ENCODE measurements at regions of chr17 and their contacts with region 1.

Region 1: DNA sequence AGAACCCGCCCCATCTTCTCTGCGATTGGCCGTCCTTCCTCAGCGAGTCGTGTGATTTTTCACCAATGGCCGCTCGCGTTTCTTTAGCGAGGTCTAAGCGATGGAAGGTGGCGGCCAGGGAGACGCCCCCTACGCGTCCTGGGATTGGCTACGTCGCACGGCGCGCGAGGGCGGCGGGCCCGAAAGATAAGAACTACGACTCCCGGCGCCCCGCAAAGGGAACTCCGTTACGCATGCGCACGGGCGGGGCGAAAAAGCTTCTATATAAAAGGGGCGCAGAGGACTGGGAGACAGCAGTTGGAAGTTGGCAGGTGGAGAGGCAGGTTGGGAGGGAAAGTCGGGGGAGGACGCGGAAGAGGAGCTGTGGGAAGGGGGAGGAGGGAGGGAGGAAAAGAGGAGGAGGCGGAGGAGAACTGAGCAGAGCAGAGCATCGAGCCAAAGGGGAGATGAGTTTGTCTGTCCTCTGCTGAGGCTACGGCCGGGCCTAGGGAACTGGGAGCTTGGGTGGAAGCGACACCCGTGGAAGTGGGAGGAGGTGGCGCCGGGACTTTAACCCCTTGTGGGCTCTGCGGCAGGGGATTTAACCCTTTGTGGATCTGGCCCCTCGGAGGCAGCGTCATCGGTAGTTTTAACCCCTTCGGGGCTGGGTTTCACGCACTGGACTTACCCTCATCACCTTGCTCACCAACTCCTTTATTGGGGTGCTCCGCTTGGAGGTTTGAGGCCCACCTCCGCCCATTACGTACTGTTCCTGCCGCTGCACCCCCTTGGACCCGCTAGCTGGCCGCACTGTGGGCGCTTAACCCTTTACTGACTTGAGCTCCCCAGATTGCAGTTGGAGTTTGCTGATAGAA is at the start of gene HEXIM1:
- DNase-seq: peak; percentile 99 to 100 (median 99)
- ATAC-seq: peak; percentile 80 to 88 (median 84)
- H3K4me3 ChIP-seq: peak within 1 kb of the TSS; percentile 63 to 93 (median 79)
- H3K27ac ChIP-seq: peak within 1 kb of the TSS; percentile 95 to 100 (median 99)
- H3K4me1 ChIP-seq: peaks cover 5 to 67% (median 36%) of the 10 kb centered on the region in 12 donors
- H3K27me3 ChIP-seq: no peaks in the 10 kb centered on the region
- CTCF ChIP-seq: no peak
- POLR2A ChIP-seq: peak; percentile 79 to 99
- total RNA-seq, gene HEXIM1: 14.4 to 28.7 (median 22.5) TPM

Region 2: DNA sequence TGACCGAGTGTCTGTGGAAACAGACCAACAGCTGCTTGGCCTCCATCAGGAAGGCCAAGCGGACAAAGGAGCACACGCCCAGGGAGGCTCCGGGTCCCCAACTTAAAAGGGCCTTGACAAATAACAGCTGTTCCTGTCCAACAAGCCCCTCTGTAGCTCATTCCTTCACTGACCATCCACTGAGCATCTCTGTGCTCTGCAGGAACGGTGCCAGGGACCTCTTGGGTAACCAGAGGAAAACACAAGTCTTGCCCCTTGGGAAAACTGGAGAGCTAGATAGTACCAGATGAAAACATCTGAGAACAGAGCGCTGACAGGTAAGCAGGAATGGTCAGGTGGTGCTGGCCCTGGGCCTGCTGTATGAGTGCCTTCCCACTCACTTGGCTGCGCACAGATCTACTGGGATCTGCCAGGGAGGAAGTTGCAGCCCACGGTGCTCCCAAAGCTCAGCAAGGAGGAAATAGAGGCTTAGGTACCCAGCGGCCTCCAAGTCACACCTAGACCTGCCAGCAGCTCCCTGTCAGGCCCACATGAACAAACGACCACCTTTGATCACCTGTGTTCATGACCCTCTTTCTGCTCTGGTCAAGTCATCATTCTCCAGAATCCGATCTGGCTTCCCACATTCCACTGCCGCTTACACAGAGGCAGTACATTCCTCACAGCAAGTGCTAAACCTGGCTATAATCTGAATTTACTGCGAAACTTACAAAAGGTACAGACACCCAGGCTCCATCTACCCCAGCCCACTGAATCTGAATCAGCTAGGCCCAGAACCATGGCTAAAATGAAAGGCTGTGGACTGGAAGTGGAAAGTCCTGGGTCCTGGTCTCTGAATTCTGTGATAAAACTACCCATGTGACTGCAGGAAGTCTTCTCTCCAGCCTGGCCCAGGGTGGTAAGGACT is 109.4 kb before region 1 on chr17:
- intact Hi-C with region 1: no loop called
- DNase-seq: peak in 1 of 5 donors; percentile 47
- ATAC-seq: peak in 2 of 4 donors; percentile 13 to 29
- H3K4me3 ChIP-seq: no peak overlapping the region
- H3K27ac ChIP-seq: peak overlapping the region in 2 of 12 donors; percentile 3 to 14
- H3K4me1 ChIP-seq: peaks cover 0 to 46% (median 23%) of the 10 kb centered on the region in 12 donors
- H3K27me3 ChIP-seq: no peaks in the 10 kb centered on the region
- CTCF ChIP-seq: no peak
- POLR2A ChIP-seq: no peak

Region 3: DNA sequence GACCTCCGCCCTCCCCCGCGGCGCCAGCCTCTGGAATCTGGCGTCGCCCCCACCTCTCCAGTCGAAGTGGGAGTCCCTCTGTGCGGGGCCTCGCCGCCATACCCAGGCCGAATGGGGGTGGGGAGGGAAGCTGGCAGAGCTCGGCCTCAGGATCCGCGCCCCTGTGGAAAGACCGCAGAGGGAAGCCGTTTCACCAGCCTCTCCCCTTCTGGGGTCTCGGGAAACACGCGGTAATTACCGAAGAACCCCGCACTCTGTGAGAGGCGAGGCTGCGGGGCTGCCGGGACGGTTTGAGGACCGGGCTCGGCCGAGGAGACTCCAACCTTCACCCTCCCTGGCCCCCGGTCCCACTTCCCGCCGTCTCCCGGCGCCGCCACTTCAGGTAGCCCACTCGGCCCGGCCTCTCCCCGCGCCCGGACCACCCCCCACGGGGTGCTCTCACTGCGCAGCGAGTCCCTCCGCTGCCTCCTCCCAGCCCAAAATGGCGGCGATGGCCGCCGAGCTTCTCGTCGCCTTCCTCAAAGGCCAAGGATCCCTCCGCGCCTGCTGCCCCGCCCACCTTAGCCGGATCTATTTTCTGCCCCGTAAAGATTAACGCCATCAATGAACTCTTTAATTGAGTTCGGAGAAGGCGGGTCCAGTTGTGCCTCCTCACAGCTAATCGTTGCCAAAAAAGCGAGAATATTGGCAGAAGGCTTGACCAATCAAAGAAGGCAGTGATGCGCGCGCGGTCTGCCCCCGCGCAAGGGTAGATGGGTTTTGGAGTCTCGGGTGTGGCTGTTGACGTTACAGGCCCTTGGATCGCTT is 12.8 kb after region 1 on chr17:
- intact Hi-C with region 1: loop called in 6 of 10 experiments (anchors 1 kb)
- DNase-seq: peak; percentile 97 to 99 (median 98)
- ATAC-seq: peak; percentile 96 to 98 (median 97)
- H3K4me3 ChIP-seq: peak overlapping the region; percentile 65 to 98 (median 93)
- H3K27ac ChIP-seq: peak overlapping the region; percentile 96 to 100 (median 100)
- H3K4me1 ChIP-seq: peaks cover 6 to 50% (median 36%) of the 10 kb centered on the region in 12 donors
- H3K27me3 ChIP-seq: no peaks in the 10 kb centered on the region
- CTCF ChIP-seq: peak in 3 of 12 donors; percentile 8 to 21 (median 17)
- POLR2A ChIP-seq: peak in 1 of 2 donors; percentile 81

Region 4: DNA sequence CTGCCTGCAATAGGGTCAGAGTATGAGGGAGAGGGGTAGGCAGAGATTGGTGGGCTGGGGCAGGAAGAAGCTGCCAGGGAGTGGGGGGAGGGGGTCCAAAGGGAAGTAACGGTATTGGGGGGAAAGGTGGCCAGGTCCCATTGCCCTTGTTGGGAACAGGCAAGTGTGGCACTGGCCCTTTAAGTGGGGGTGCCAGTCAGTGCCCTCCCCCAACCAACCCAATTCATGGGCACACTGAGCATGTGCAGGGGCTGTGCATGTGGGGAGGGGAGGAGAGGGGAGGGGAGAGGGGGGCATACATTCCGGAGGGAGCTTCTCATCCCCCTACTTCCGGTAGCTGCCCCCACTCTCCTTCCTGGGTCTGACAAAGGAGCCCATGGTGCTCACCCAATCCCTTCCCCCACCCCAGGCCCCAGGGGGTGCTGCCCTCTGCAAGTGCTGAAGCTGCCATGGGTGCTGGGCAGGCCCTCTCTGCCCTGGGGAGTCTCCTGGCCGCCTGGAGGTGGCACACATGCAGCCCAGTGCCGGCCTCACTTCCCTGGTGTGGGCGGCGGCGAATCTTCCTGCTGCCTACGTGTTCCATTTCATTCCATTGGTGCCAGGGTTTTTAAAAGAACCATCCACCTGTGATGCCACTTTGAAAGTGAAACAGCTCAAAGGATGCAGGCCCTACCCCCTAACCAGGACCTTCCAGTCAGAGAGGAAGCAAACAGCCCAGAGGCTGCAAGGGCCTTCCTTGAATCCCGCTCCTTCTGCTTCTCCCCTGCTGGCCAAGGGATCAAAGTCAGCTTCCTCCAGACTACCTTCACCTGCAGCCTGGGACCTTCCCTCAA is 24.3 kb after region 1 on chr17:
- intact Hi-C with region 1: no loop called
- DNase-seq: peak; percentile 67 to 83 (median 77)
- ATAC-seq: peak; percentile 83 to 90 (median 88)
- H3K4me3 ChIP-seq: peak overlapping the region in 10 of 12 donors; percentile 13 to 48 (median 38)
- H3K27ac ChIP-seq: peak overlapping the region; percentile 77 to 93 (median 84)
- H3K4me1 ChIP-seq: peaks cover 0 to 38% (median 28%) of the 10 kb centered on the region in 12 donors
- H3K27me3 ChIP-seq: no peaks in the 10 kb centered on the region
- CTCF ChIP-seq: peak in 2 of 12 donors; percentile 14 to 30
- POLR2A ChIP-seq: peak in 1 of 2 donors; percentile 7